Mammary epithelial cell (primary cell): ENCODE measurements at regions of chr5 and their contacts with region 1.

Region 1: GRCh38 chr5:141889282-141889871 is 11.2 kb upstream of the PCDH1 start:
- DNase-seq: no peak
- H3K4me3 ChIP-seq: no peak overlapping the region
- H3K27ac ChIP-seq: no peak overlapping the region
- H3K4me1 ChIP-seq: no peaks in the 10 kb centered on the region
- H3K27me3 ChIP-seq: no peaks in the 10 kb centered on the region
- CTCF ChIP-seq: peak; percentile 33 to 69

Region 2: GRCh38 chr5:141835928-141836670 is 53.3 kb before region 1 on chr5:
- CTCF ChIA-PET with region 1: no interaction called
- dilution Hi-C with region 1: loop called (anchors 5 kb)
- in situ Hi-C with region 1: no loop called
- intact Hi-C with region 1: no loop called
- DNase-seq: no peak
- H3K4me3 ChIP-seq: no peak overlapping the region
- H3K27ac ChIP-seq: no peak overlapping the region
- H3K4me1 ChIP-seq: peaks cover 8% of the 10 kb centered on the region
- H3K27me3 ChIP-seq: no peaks in the 10 kb centered on the region
- CTCF ChIP-seq: no peak